ENCODE measurements at regions of chr1 and their contacts with region 1.

Region 1: GRCh38 chr1:226029093-226029496 is 30.0 kb upstream of the SDE2 start:
- DNase-seq: peak; percentile 59
- ATAC-seq: peak; percentile 93
- H3K4me3 ChIP-seq: no peak overlapping the region
- H3K27ac ChIP-seq: peak overlapping the region; percentile 36
- H3K4me1 ChIP-seq: peaks cover 26% of the 10 kb centered on the region
- H3K27me3 ChIP-seq: no peaks in the 10 kb centered on the region
- CTCF ChIP-seq: no peak
- EP300 ChIP-seq: peak; percentile 81 to 83
- POLR2A ChIP-seq: no peak
- RAD21 ChIP-seq: no peak

Region 2: GRCh38 chr1:225875044-225875814 is 153.9 kb before region 1 on chr1:
- CTCF ChIA-PET with region 1: no interaction called
- POLR2A ChIA-PET with region 1: no interaction called
- RAD21 ChIA-PET with region 1: no interaction called
- SMC1A ChIA-PET with region 1: no interaction called
- in situ Hi-C with region 1: no loop called
- intact Hi-C with region 1: no loop called
- DNase-seq: no peak
- ATAC-seq: no peak
- H3K4me3 ChIP-seq: no peak overlapping the region
- H3K27ac ChIP-seq: no peak overlapping the region
- H3K4me1 ChIP-seq: peaks cover 12% of the 10 kb centered on the region
- H3K27me3 ChIP-seq: no peaks in the 10 kb centered on the region
- CTCF ChIP-seq: no peak
- EP300 ChIP-seq: no peak
- POLR2A ChIP-seq: no peak
- RAD21 ChIP-seq: no peak

Region 3: DNA sequence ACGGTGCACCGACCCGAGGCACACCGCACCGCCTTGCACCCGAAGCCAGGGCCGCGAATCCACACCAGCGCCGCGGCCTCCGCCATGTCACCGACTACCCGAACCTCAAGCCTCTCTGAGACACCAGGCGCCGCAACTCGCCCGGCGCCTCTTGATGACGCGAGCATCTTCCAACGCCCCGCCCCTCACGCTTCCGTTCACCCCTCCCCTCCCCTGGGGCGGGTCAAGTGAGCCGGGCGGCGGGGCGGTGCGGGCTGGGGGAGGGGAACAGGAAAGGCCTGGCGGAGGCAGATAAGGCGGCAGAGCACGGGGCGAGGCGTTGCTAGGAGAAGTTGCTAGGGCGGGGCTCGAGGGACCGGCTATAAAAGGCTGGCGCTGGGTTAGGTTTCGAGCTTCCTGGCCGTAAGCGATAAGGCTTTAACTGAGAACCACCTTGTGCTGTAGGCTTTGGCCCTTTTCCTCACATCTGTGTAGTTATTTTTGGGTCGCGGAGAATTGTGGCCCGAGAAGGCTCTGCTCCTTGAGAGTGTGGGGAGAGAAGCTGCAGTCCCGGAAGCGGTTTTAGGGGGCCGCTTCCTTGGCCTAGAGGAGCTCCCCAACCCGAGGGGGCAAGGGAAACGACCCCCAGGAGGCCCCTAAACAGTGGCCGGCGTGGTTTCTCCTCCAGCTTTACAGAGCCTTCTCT is 29.7 kb before region 1 on chr1 and contains the start of gene SDE2:
- CTCF ChIA-PET with region 1: interaction called, 11 read pairs
- POLR2A ChIA-PET with region 1: interaction called, 32 read pairs
- RAD21 ChIA-PET with region 1: interaction called, 27 read pairs
- SMC1A ChIA-PET with region 1: interaction called, 39 read pairs
- in situ Hi-C with region 1: no loop called
- intact Hi-C with region 1: loop called (anchors 1 kb)
- DNase-seq: peak; percentile 95
- ATAC-seq: peak; percentile 83
- H3K4me3 ChIP-seq: peak within 1 kb of the TSS; percentile 96
- H3K27ac ChIP-seq: peak within 1 kb of the TSS; percentile 97
- H3K4me1 ChIP-seq: peaks cover 39% of the 10 kb centered on the region
- H3K27me3 ChIP-seq: no peaks in the 10 kb centered on the region
- CTCF ChIP-seq: no peak
- EP300 ChIP-seq: no peak; a peak in 1 of 4 replicates
- POLR2A ChIP-seq: peak; percentile 100
- RAD21 ChIP-seq: no peak
- polyA plus RNA-seq, gene SDE2: 2.7 to 4.3 TPM

Region 4: DNA sequence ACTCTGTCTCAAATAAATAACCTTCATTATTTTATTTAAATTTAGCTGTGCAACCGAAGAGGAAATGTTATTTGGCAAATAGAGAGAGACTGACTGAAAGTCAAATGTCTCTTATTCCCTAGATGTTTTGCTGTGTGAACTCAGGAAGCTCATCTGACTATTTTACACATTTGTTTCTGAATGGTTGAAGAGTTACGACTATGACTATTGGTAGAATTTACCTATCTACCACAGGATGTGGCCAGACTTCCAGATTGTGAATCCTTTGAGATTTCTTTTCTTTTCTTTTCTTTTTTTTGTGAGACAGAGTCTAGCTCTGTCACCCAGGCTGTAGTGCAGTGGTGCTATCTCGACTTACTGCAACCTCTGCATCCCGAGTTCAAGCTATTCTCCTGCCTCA is 24.7 kb before region 1 on chr1:
- CTCF ChIA-PET with region 1: interaction called, 11 read pairs
- POLR2A ChIA-PET with region 1: interaction called, 32 read pairs
- RAD21 ChIA-PET with region 1: interaction called, 27 read pairs
- SMC1A ChIA-PET with region 1: interaction called, 39 read pairs
- in situ Hi-C with region 1: no loop called
- intact Hi-C with region 1: loop called (anchors 1 kb)
- DNase-seq: no peak
- ATAC-seq: no peak; the same call in 2 of the 3 replicates
- H3K4me3 ChIP-seq: no peak overlapping the region
- H3K27ac ChIP-seq: peak overlapping the region; percentile 59
- H3K4me1 ChIP-seq: peaks cover 42% of the 10 kb centered on the region
- H3K27me3 ChIP-seq: no peaks in the 10 kb centered on the region
- CTCF ChIP-seq: no peak
- EP300 ChIP-seq: no peak
- POLR2A ChIP-seq: no peak
- RAD21 ChIP-seq: no peak

Region 5: GRCh38 chr1:226181996-226182714 is 153.1 kb after region 1 on chr1:
- CTCF ChIA-PET with region 1: no interaction called
- POLR2A ChIA-PET with region 1: no interaction called
- RAD21 ChIA-PET with region 1: no interaction called
- SMC1A ChIA-PET with region 1: no interaction called
- in situ Hi-C with region 1: no loop called
- intact Hi-C with region 1: no loop called
- DNase-seq: no peak
- ATAC-seq: peak; percentile 66
- H3K4me3 ChIP-seq: peak overlapping the region; percentile 53; the same call in 1 of the 2 replicates
- H3K27ac ChIP-seq: no peak overlapping the region
- H3K4me1 ChIP-seq: peaks cover 7% of the 10 kb centered on the region; the same call in 1 of the 2 replicates
- H3K27me3 ChIP-seq: no peaks in the 10 kb centered on the region
- CTCF ChIP-seq: peak; percentile 33 to 55 (median 52)
- EP300 ChIP-seq: no peak
- POLR2A ChIP-seq: no peak
- RAD21 ChIP-seq: no peak